Activated T-helper 1 cell treated with anti-CD3 and anti-CD28 coated beads, Interleukin-12 subunit alpha, Interleukin-12 subunit beta, Interleukin-2, Interleukin-4 antibody, amounts not matched to agents 30 ng/mL and 10 ng/mL and 1 ng/mL, durations not matched to agents 14 hours and 24 hours and 36 hours (primary cell): ENCODE measurements at regions of chr5 and their contacts with region 1.

Region 1: DNA sequence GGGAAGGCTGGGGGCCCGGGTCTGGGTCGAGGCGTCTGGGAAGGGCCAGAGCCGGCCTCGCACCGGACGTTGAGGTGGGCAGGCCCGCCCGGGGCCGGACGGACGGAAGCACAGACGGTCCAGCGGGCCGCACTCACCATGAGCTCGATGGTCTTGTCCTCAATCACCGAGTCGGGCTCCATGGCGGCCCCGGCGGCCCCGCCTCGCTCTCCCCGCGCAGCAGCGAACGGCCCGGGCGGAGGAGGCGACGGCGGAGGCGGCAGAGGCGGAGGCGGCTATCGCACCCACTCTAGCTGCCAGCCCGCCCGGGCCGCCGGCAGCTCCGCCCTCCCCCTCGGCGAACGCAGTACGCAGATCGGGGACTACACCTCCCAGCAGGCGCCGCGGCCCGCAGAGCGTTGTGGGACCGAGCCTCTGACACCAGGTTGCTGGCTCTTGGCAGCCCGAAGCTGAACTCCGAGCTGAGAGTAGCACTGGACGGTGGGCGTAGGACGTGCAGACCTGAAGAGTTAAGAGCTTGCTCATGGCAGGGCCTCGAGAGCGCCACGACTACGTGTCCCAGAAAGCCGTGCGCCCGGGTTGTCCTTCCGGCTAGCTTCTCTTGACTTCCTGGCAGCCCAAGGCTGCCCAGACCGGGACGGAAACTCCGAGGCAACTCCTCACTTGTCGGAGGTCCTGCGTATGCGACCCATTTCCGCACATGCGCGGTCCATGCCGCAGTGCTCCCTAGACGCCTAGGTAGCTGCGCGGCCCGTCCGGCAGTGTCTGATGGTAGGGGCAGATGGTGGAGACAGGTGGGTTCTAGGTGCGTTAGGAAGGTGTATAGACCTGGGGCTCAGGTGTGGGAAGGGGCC is at the start of gene FBXW11:
- DNase-seq: peak; percentile 93
- H3K4me3 Mint-ChIP-seq: peak within 1 kb of the TSS; percentile 95
- H3K27ac Mint-ChIP-seq: peak within 1 kb of the TSS; percentile 95
- H3K4me1 Mint-ChIP-seq: peaks cover 57% of the 10 kb centered on the region
- H3K27me3 Mint-ChIP-seq: no peaks in the 10 kb centered on the region
- total RNA-seq, gene FBXW11: 55.6 and 57.9 TPM in 2 replicates

Region 2: DNA sequence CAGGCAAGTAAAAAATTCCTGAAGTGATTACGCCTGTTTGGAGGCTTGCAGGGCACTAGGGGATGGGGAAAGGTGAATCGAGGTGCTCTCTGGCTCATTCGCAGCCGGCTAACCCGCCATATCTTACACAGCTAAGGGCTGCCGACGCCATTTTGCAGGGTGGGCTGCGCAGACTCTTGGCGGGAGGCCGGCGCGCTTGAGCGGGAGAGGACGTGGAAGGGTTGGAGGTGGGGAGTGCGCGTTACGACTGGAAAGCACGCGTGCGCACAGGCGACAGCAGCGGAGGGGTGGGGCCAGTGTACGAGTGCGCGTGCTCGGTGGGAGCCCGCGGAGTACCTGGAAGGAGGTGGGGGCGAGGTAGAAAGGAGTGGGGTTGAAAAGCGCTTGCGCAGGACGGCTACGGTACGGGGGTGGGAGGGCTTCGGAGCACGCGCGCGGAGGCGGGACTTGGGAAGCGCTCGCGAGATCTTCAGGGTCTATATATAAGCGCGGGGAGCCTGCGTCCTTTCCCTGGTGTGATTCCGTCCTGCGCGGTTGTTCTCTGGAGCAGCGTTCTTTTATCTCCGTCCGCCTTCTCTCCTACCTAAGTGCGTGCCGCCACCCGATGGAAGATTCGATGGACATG is 619.1 kb before region 1 on chr5 and contains the start of gene NPM1:
- intact Hi-C with region 1: loop called (anchors 1 kb)
- DNase-seq: peak; percentile 97
- H3K4me3 Mint-ChIP-seq: peak within 1 kb of the TSS; percentile 97
- H3K27ac Mint-ChIP-seq: peak within 1 kb of the TSS; percentile 98
- H3K4me1 Mint-ChIP-seq: peaks cover 43% of the 10 kb centered on the region
- H3K27me3 Mint-ChIP-seq: peaks cover 8% of the 10 kb centered on the region
- total RNA-seq, gene NPM1: 2,729 and 2,809 TPM in 2 replicates

Region 3: GRCh38 chr5:171968531-171968930 is 38.0 kb before region 1 on chr5:
- intact Hi-C with region 1: no loop called
- DNase-seq: no peak
- H3K4me3 Mint-ChIP-seq: no peak overlapping the region
- H3K27ac Mint-ChIP-seq: peak overlapping the region; percentile 34
- H3K4me1 Mint-ChIP-seq: peaks cover 54% of the 10 kb centered on the region
- H3K27me3 Mint-ChIP-seq: no peaks in the 10 kb centered on the region

Region 4: GRCh38 chr5:171984748-171985419 is 21.7 kb before region 1 on chr5:
- intact Hi-C with region 1: loop called (anchors 1 kb)
- DNase-seq: peak; percentile 49
- H3K4me3 Mint-ChIP-seq: no peak overlapping the region
- H3K27ac Mint-ChIP-seq: peak overlapping the region; percentile 16
- H3K4me1 Mint-ChIP-seq: peaks cover 42% of the 10 kb centered on the region
- H3K27me3 Mint-ChIP-seq: no peaks in the 10 kb centered on the region

Region 5: DNA sequence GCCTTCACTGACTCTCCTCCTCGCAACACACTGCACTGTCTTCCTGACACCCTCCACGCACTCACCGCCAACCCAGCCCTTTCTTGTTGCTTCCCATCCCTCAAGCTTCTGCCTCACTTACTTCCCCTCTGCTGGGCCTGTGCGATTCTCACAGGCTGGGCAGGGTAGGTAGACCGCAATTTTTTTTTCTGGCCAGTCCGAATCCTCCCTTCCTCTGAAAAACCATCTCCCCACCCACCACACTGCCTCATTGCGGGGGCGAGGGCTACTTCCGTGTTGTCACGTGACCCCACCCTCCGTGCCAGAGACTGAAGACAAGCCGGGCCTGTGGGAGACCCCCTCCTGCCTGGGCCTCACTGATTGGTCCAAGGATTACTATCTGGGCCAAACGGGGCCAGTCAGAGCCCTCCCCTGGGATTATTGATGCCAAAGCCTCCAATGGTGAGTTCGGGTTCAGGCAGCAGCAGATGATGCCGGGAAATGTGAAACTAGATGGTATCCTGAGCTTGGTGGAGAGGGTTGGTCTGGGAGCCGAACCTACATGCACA is 108.4 kb after region 1 on chr5:
- intact Hi-C with region 1: loop called (anchors 2 kb)
- DNase-seq: peak; percentile 68
- H3K4me3 Mint-ChIP-seq: peak overlapping the region; percentile 78
- H3K27ac Mint-ChIP-seq: peak overlapping the region; percentile 91
- H3K4me1 Mint-ChIP-seq: peaks cover 67% of the 10 kb centered on the region
- H3K27me3 Mint-ChIP-seq: no peaks in the 10 kb centered on the region

Region 6: DNA sequence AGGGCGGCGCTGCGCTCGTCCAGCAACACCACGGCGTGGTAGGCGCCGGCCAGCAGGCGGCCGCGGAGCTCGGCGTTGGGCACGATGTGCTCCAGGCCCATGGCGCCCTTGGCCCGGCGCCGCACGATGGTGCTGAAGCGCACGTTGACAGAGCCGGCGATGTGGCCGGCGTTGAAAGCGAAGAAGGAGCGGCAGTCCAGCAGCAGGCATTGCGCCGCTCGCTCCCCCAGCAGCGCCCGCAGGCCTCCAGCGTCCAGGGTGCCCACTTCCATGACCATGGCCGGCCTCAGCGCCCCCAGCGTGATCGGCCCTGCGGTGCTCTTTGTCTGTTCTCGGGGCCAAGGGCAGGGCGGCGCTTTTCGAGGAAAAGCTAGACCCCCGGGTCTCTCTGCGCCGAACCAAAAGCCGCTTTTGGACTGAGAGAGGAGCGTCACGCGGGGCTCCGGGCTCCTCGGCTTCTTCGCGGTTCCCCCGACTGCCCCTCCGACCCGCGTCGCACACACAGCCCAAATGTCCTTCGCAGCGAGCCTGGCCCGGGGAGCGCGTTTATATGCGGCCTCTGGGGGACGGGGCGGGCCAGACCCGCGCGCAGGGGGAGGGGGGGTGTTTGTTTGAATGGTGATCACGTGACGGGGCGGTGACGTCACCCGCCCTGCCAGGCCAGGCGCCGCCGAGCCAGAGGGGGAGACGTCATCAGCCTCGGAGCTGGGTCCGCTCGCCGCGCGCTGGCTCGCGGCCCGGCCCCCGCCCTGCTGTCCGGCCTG is 764.3 kb after region 1 on chr5 and contains the start of gene DUSP1:
- intact Hi-C with region 1: loop called (anchors 2 kb)
- DNase-seq: peak; percentile 93
- H3K4me3 Mint-ChIP-seq: peak within 1 kb of the TSS; percentile 88
- H3K27ac Mint-ChIP-seq: peak within 1 kb of the TSS; percentile 98
- H3K4me1 Mint-ChIP-seq: peaks cover 61% of the 10 kb centered on the region
- H3K27me3 Mint-ChIP-seq: no peaks in the 10 kb centered on the region
- total RNA-seq, gene DUSP1: 11.9 and 12.5 TPM in 2 replicates

Region 7: GRCh38 chr5:173887610-173888472 is 1881.3 kb after region 1 on chr5 and contains the start of gene CPEB4:
- intact Hi-C with region 1: loop called (anchors 5 kb)
- DNase-seq: peak; percentile 96
- H3K4me3 Mint-ChIP-seq: peak within 1 kb of the TSS; percentile 91
- H3K27ac Mint-ChIP-seq: peak within 1 kb of the TSS; percentile 98
- H3K4me1 Mint-ChIP-seq: peaks cover 79% of the 10 kb centered on the region
- H3K27me3 Mint-ChIP-seq: no peaks in the 10 kb centered on the region
- total RNA-seq, gene CPEB4: 9.1 and 14.1 TPM in 2 replicates